ENCODE measurements at regions of chr1 and their contacts with region 1.

Region 1: GRCh38 chr1:84936116-84936810 is 43.3 kb upstream of the LPAR3 start:
- DNase-seq: no peak
- H3K4me3 ChIP-seq: no peak overlapping the region
- H3K27ac ChIP-seq: no peak overlapping the region
- H3K4me1 ChIP-seq: peaks cover 0 to 3% (median 0%) of the 10 kb centered on the region in 4 donors
- H3K27me3 ChIP-seq: no peaks in the 10 kb centered on the region
- CTCF ChIP-seq: peak; percentile 69 to 87 (median 74)
- EP300 ChIP-seq: no peak
- POLR2A ChIP-seq: no peak

Region 2: DNA sequence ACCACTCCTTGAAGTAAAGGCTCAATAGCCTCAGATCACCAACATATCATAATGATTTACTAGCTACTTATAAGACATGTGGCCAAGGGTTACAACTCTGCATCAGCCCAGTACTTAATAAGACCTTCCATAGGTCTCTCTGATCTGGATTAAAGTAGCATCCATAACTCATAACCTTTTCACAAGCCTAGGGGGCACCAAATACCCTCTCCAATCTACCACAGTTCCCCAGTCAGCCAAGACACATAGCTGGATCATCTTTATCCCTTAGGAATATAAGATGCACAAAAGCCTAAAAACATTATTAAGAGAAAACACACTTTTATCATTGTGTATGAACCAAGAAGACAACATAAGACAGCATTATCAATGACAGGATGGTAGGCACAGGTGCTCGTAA is 268.1 kb before region 1 on chr1:
- intact Hi-C with region 1: loop called (anchors 10 kb)
- DNase-seq: no peak
- H3K4me3 ChIP-seq: no peak overlapping the region
- H3K27ac ChIP-seq: no peak overlapping the region
- H3K4me1 ChIP-seq: no peaks in the 10 kb centered on the region
- H3K27me3 ChIP-seq: no peaks in the 10 kb centered on the region
- CTCF ChIP-seq: peak in 1 of 4 experiments; percentile 33
- EP300 ChIP-seq: no peak
- POLR2A ChIP-seq: no peak

Region 3: GRCh38 chr1:84772428-84772943 is 163.8 kb before region 1 on chr1:
- intact Hi-C with region 1: loop called (anchors 5 kb)
- DNase-seq: peak; percentile 91
- H3K4me3 ChIP-seq: no peak overlapping the region
- H3K27ac ChIP-seq: no peak overlapping the region
- H3K4me1 ChIP-seq: no peaks in the 10 kb centered on the region
- H3K27me3 ChIP-seq: no peaks in the 10 kb centered on the region
- CTCF ChIP-seq: peak; percentile 73 to 90 (median 80)
- EP300 ChIP-seq: no peak
- POLR2A ChIP-seq: no peak

Region 4: GRCh38 chr1:84834419-84835064 is 101.7 kb before region 1 on chr1:
- intact Hi-C with region 1: no loop called
- DNase-seq: no peak
- H3K4me3 ChIP-seq: no peak overlapping the region
- H3K27ac ChIP-seq: no peak overlapping the region
- H3K4me1 ChIP-seq: no peaks in the 10 kb centered on the region
- H3K27me3 ChIP-seq: no peaks in the 10 kb centered on the region
- CTCF ChIP-seq: no peak
- EP300 ChIP-seq: no peak
- POLR2A ChIP-seq: no peak